Esophagus squamous epithelium (tissue), 5 donors: ENCODE measurements at regions of chr5 and their contacts with region 1.

Region 1: DNA sequence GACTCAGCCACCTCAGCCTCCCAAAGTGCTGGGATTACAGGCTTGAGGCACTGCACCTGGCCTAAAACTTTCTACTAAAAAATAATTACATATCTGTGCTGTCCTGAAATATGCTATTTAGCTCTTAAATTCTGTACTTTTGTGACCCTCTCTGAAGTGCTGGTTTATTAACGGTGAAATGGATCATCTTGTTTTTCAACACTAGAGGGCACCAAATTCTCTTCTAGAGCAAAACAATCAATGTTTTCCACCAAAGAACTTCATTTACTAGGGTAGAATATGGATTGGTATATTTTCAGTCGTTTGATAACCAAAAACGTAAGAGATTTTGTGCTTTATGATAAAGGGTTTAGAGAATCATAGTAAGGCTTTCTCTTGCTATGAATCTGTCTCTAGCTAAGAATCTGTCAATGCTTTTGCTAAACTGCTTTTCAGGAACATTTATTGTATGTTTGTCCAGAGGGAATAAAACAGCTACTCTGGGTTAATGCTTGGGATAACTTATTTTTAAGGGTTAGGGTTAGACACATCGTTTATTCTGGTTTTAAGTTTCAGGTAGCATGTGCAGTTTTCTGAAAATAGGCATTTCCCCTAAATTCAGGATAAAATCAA is 63.6 kb downstream of the RNF180 start:
- DNase-seq: no peak
- H3K4me3 ChIP-seq: no peak overlapping the region
- H3K27ac ChIP-seq: no peak overlapping the region
- H3K4me1 ChIP-seq: no peaks in the 10 kb centered on the region
- H3K27me3 ChIP-seq: no peaks in the 10 kb centered on the region
- CTCF ChIP-seq: peak in 5 of 6 experiments; percentile 40 to 67 (median 53)
- POLR2A ChIP-seq: no peak

Region 2: DNA sequence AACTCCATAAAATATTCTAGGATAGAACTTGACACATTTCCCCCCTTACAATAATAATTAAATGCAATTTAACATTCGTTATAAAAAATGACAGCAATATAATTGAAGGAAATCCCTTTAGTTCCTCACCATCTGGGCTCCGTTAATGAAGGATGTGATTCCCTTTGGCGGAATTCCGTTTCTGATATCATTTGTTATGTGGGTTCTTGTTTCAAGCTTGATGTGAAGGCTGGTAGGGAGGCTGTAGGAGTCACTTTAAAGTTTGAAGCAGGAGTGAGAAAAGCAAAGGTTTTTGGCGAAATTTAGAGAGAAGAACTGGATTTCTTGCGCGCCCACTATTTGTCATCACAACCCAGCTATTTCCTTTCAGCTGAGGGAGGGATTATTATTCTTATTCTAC is 280.6 kb after region 1 on chr5:
- intact Hi-C with region 1: no loop called
- DNase-seq: no peak
- H3K4me3 ChIP-seq: no peak overlapping the region
- H3K27ac ChIP-seq: no peak overlapping the region
- H3K4me1 ChIP-seq: peaks cover 0 to 20% (median 0%) of the 10 kb centered on the region in 3 donors
- H3K27me3 ChIP-seq: peaks cover 0 to 28% (median 0%) of the 10 kb centered on the region in 4 donors
- CTCF ChIP-seq: no peak
- POLR2A ChIP-seq: no peak

Region 3: DNA sequence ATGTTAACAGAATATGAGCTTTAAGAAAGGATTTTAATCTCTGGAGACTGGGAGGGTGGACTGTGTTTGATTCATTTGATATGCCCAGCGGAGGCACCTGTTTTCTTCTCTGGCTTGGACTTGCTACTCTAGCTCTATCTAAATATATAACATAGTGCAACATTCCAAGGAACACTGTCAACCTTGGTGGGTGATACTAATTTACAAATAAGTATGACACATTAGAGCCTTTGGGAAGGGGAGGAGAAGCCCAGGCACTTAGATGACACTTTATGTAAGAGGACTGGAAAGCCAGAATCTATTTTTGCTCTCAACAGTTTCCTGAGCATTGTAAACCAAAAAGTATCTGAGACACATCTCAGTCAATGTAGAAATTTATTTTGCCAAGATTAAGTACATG is 377.7 kb after region 1 on chr5:
- intact Hi-C with region 1: loop called (anchors 5 kb)
- DNase-seq: no peak
- H3K4me3 ChIP-seq: no peak overlapping the region
- H3K27ac ChIP-seq: no peak overlapping the region
- H3K4me1 ChIP-seq: peaks cover 0 to 8% (median 0%) of the 10 kb centered on the region in 3 donors
- H3K27me3 ChIP-seq: no peaks in the 10 kb centered on the region
- CTCF ChIP-seq: no peak
- POLR2A ChIP-seq: no peak